ENCODE measurements at regions of chr6 and their contacts with region 1.

Region 1: GRCh38 chr6:7389451-7390225 is at the starts of genes CAGE1 and RIOK1:
- DNase-seq: peak; percentile 91 to 99 (median 96)

Region 2: DNA sequence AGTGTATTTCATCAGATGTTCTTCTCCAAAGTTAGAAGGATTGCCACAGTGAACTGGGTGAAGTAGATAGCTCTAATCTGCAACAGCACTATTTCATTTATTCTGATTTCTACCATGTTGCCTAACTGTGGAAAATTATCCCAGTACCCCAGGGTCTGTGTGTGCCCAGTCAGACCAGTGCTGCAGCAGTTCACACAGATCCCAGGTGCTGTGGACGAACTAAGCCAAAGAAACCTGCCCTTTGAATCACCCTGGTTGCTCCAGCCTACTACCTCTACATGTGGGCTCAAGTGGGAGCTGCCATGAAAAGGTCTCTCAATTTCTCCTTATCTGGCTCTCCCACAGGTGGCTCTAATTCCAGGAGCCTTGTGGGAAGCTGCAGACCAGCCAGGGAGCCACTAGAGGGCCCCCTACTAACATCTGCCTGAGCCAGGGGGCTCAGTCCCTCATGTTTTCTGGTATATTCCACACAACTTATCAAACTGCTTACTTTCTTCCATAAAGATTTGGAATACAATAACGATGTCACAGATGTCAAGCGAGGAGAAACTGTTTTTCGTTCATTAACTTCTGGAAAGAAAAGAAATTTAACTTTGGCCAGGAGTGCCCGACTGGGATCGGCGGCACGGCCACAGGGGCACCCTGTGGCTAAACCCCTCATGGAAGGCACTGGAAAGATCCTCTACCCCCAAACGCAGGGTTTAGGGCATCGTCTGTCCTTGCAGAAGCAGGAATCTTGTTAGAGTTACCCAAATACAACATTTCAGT is 832.7 kb before region 1 on chr6:
- intact Hi-C with region 1: no loop called
- DNase-seq: peak in 4 of 10 donors; percentile 23 to 89 (median 51)

Region 3: DNA sequence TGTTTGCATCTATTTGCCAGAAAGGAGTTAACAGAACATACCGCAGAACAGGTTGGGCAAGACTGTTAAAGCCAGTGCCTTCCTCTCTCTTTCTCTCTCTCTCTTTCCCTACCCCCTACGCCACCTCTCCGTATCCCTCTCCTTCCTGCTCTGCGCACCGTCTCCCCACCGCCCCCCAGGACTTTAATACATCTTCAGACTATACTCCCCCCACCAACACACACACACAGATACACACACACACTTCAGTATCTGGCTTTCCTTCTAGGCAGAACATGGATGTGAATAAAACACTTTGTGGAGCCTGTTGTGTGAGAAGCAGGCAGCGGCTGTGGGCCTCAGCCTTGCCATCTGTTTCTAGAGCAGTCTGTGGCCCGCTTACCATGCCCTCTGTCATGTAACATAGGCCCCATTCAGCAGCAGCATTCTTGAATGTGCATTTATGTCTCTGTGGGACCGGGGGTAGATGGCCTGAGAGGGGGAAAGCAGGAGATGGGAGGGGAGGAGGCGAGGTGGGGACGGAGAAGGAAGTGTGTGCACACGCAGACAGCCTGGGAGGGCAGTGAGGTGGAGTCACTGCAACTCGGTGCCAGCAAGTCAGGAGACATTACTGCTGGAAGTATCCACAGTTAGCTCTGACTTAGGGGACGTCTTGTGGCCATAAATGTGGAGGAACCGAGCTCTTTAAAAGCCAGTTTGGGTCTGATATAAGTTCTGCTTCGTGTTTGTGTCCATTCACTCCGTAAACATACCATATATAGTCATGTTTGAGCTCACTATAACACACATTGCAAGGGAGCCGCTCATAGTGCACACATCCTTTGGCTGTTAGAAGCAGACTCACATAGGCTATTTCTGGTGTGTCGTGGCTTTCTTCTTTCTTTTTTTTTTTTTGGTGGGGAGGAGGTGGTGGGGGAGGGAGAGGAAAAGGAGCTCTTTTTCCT is 243.5 kb before region 1 on chr6:
- intact Hi-C with region 1: no loop called
- DNase-seq: no peak

Region 4: DNA sequence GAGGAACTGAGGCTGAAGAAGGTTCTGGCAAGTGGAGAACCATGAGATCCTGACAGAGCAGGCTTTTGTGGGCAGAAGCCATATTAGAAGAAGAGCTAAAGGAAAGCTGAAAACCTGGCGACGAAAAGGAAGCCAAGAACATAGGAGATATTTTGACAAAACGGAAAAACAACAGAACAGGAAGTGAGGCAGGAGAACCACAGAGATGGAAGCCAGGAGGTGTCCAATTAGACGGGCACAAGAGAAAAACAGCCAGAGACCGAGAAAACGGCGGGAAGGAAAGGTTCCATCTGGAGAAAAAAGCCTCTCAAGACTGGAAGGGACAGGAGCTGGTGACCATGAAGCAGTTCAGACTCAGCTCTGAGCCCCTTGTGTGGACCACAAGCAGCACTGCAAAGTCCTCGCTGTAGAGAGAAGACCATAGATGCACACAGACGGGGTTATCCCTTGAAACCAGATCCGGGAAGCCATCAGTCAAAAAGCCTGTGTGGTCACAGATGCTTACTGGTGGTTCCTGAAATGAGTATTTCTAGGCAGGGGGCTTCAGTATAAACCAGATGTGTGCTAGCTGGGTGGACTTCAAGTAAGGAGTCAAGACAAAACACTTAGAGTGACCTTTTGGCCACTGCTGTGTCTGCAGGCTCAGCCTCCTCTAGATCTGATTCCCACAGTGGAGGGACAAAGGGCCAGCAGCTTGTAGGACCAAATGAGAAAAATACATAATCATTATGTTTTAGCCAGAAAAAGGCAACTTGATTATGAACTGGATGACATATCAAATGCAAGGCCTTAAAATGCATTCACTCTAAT is 107.3 kb before region 1 on chr6:
- intact Hi-C with region 1: loop called (anchors 10 kb)
- DNase-seq: no peak

Region 5: GRCh38 chr6:7312616-7313504 is 76.8 kb before region 1 on chr6 and contains the start of gene SSR1:
- intact Hi-C with region 1: loop called (anchors 1 kb)
- DNase-seq: peak; percentile 97 to 100 (median 99)

Measured in posterior cingulate gyrus (tissue), 11 donors.